GM10248 (cell line): ENCODE measurements at regions of chr9 and their contacts with region 1.

Region 1: DNA sequence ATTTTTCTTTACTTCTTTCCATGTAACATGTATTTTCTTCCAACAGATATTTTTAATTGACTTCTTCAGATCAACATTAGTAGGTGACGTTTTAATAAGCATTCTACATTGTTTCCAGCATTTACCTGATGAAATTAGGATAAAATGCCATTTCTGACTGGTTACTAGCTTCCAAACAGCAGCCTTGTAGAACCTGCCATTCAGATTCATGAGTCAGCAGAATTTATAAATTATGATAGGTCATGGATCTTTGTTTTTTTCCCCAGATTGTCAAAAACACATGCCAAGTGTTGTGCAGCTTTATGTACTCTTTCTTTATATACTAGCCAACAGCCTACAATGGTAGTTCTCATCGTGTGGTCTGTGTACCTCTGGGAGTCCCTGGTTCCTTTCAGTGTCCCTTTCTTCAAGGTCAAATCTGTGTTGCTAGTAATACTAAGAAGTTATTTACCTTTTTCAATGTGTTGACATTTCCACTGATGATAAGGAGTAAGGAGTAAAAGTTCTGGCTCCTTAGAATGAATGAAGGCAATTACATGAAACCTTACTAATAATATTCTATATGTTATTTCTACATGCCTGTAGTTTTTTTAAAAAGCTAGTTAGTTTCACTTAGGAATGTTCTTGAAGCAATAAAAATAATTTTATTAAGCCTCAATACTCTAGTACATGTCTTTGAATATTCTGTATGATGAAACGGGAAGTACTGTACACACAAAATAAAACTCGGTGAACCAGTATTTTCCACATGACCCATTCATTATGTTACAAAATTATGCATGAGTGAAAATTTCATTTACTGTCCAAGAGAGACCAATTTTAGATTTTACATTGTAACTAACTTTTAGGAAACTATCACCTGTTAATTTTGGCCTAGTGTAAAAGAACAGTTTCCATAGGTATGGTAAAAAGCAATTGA is 135.8 kb downstream of the ZCCHC7 start:
- DNase-seq: no peak
- CTCF ChIP-seq: no peak

Region 2: DNA sequence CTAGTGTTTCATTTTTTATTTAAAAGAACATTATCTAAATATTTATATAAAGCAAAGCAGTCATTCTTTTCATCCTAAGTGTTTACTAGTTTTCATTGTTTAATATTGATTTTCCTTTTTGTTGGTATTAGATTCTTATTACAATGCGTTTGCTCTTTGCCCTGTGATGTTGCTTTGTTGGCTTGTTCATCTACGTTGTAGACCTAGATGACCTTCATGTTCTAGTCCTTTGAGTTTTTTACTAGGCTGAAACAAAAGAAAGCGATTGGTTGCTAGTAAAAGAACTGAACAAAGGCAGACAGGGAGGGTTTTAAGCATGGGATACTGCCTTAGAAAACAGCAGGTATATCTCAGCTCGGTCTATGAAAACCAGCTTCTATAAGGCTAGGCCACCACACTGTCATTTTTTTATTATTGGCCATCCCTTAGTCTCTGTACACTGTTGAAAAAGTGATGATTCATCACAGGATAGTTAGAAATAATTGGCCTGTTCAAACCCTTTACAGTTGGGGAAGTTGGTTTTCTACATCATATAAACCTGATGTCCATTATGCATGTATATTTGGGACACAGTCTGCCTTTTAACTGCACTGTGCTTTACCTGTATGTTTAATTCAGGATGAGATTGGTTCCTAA is 16.9 kb before region 1 on chr9:
- CTCF ChIA-PET with region 1: interaction called, 11 read pairs
- POLR2A ChIA-PET with region 1: no interaction called
- DNase-seq: no peak
- CTCF ChIP-seq: no peak